ENCODE measurements at regions of chr4 and their contacts with region 1.

Region 1: DNA sequence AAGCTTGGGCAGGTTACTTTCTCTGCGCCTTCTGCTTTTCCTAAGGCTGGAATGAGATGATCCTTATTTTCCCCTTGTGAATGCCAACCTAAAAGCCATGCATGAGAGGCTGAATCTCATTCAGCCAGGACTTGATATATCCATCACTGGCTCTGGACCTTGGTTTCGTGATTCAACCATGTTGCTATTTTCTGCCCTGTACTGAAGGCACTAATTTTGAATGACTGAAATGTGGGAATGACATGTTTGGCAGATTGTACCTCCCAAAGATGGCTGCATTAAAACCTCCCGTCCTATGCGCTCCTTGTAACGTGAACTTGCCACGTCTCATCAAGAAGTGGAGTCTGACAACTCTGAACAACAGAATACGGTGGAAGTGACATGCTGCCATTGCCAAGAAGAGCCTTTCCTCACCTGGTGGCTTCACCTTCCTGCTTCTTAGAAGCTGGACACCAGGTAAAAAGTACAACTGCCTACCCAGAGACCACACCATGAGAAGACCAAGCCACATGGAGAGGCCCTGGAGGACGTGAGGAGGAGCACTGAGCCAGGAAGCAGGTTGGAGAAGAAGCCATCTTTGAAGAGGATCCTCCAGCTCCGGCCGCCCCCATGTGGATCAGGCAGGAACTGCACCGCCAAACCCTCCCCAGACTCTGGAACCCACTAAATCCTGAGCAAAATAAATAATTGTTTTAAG is 174.5 kb downstream of the NSUN7 start:
- DNase-seq: peak in 1 of 2 experiments; percentile 93
- H3K4me3 ChIP-seq: no peak overlapping the region
- H3K27ac ChIP-seq: no peak overlapping the region
- H3K4me1 ChIP-seq: peaks cover 0 to 5% (median 0%) of the 10 kb centered on the region in 4 experiments; a peak in 3 of 7 replicates
- H3K27me3 ChIP-seq: no peaks in the 10 kb centered on the region
- CTCF ChIP-seq: peak; percentile 74 to 84 (median 83)
- EP300 ChIP-seq: no peak
- POLR2A ChIP-seq: no peak
- RAD21 ChIP-seq: peak; percentile 54 to 69

Region 2: GRCh38 chr4:40629401-40630334 is 294.6 kb before region 1 on chr4 and contains the start of gene RBM47:
- CTCF ChIA-PET with region 1: no interaction called
- POLR2A ChIA-PET with region 1: no interaction called
- DNase-seq: peak; percentile 79 to 88
- H3K4me3 ChIP-seq: peak within 1 kb of the TSS; percentile 66 to 79 (median 75)
- H3K27ac ChIP-seq: peak within 1 kb of the TSS; percentile 91
- H3K4me1 ChIP-seq: peaks cover 10 to 22% (median 20%) of the 10 kb centered on the region in 4 experiments; a peak in 6 of 7 replicates
- H3K27me3 ChIP-seq: no peaks in the 10 kb centered on the region
- CTCF ChIP-seq: no peak; a peak in 1 of 4 replicates
- EP300 ChIP-seq: no peak
- POLR2A ChIP-seq: peak; percentile 55 to 60
- RAD21 ChIP-seq: 0 out of 4 replicates have a peak, but pooled peaks of 1 of the 2 experiments have one; percentile 1
- total RNA-seq, gene RBM47: 73.1 and 78.9 TPM in 2 replicates

Region 3: DNA sequence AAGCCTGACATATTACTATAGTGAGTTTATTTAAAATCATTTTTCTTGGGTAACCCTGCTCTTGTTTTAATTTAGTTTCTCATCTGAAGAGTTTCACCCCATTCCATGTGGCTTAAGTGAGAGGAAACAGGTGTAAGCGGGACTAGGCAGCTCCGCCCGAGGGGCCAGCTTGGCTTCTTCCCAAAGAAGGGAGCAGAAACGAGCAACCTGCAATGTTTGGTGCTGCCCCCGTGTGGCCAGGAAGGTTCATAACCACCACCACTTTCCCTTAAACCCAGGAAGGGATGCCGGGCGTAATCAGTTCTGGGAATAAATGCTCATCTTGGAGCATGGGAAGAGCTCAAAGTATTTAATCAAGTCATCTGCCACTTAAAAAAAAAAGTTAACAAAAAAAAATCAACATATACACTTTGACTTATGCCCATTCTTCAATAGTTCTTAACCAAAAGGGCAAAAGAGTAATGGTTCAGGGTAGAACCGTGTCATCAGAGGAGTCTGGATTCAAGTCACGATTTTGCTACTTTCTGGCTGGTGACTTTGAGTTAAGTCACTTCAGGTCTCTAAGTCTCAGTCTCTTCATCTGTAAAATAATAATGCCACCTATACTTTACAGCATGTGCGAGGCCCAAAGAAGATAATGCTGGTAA is 26.6 kb before region 1 on chr4:
- CTCF ChIA-PET with region 1: interaction called, 13 read pairs
- POLR2A ChIA-PET with region 1: interaction called, 5 read pairs
- DNase-seq: peak; percentile 43 to 93
- H3K4me3 ChIP-seq: no peak overlapping the region
- H3K27ac ChIP-seq: no peak overlapping the region
- H3K4me1 ChIP-seq: no peaks in the 10 kb centered on the region
- H3K27me3 ChIP-seq: no peaks in the 10 kb centered on the region
- CTCF ChIP-seq: peak; percentile 79 to 90 (median 89)
- EP300 ChIP-seq: no peak
- POLR2A ChIP-seq: no peak
- RAD21 ChIP-seq: peak; percentile 73 to 78

Region 4: GRCh38 chr4:40940317-40940741 is 16.1 kb after region 1 on chr4:
- CTCF ChIA-PET with region 1: interaction called, 48 read pairs
- POLR2A ChIA-PET with region 1: interaction called, 3 read pairs
- DNase-seq: no peak
- H3K4me3 ChIP-seq: no peak overlapping the region
- H3K27ac ChIP-seq: no peak overlapping the region
- H3K4me1 ChIP-seq: peaks cover 0 to 7% (median 5%) of the 10 kb centered on the region in 4 experiments; a peak in 3 of 7 replicates
- H3K27me3 ChIP-seq: no peaks in the 10 kb centered on the region
- CTCF ChIP-seq: no peak
- EP300 ChIP-seq: no peak
- POLR2A ChIP-seq: no peak
- RAD21 ChIP-seq: no peak

Region 5: DNA sequence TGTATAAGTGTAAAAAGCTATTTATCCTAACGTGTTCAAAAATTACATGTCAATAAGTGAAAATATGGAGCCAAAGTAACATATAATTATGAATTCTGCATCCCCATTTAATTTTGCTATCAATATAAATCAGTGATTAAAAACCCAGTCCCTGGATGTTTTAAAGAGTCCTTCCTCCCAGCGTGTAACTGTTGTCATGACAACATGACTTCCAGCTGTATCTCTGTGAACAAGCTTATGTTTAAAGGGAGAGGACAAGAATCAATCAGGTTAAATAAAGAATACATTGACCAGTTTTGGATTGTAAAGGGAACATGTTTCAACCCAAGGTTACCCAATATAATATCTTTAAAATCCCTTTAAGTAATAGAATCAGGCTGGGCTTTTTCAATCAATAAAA is 45.3 kb after region 1 on chr4:
- CTCF ChIA-PET with region 1: interaction called, 16 read pairs
- POLR2A ChIA-PET with region 1: interaction called, 4 read pairs
- DNase-seq: no peak
- H3K4me3 ChIP-seq: no peak overlapping the region
- H3K27ac ChIP-seq: no peak overlapping the region
- H3K4me1 ChIP-seq: no peaks in the 10 kb centered on the region
- H3K27me3 ChIP-seq: no peaks in the 10 kb centered on the region
- CTCF ChIP-seq: no peak
- EP300 ChIP-seq: no peak
- POLR2A ChIP-seq: no peak
- RAD21 ChIP-seq: no peak

Region 6: DNA sequence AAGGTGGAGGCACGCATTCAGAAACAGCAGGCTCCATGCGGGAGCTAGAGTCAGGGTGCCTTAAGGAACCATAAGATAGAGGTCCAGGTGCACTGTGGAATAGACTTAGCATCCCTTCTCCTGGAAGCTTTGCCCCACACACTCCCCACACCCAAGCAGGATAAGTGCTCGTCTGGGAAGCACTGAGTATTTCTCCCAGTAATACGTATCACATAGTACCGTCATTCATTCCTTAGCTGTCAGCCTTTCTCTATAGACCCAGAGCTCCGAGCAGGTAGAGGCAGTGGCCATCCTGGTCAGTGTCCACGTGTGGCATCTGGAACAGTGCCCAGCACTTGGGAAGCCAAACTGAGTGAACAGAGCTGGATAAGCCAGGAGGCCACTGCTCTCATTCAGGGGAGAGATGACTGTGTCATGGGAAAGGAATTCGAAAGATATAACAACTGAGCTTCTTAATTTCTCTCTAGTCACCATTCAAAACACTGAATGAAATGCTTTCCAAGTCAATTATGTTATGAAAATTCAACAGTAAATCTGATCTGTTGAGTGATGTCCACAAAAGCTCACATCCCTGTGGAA is 280.2 kb after region 1 on chr4:
- CTCF ChIA-PET with region 1: interaction called, 13 read pairs
- POLR2A ChIA-PET with region 1: no interaction called
- DNase-seq: no peak
- H3K4me3 ChIP-seq: no peak overlapping the region
- H3K27ac ChIP-seq: no peak overlapping the region
- H3K4me1 ChIP-seq: peaks cover 0 to 5% (median 0%) of the 10 kb centered on the region in 4 experiments; a peak in 2 of 7 replicates
- H3K27me3 ChIP-seq: no peaks in the 10 kb centered on the region
- CTCF ChIP-seq: no peak
- EP300 ChIP-seq: no peak
- POLR2A ChIP-seq: no peak
- RAD21 ChIP-seq: no peak

Measured in H1 (cell line).